Left ventricle myocardium superior (tissue), 1 donor: ENCODE measurements at regions of chr12 and their contacts with region 1.

Region 1: GRCh38 chr12:44338736-44339135 is 502.9 kb downstream of the TMEM117 start:
- DNase-seq: no peak
- ATAC-seq: no peak

Region 2: DNA sequence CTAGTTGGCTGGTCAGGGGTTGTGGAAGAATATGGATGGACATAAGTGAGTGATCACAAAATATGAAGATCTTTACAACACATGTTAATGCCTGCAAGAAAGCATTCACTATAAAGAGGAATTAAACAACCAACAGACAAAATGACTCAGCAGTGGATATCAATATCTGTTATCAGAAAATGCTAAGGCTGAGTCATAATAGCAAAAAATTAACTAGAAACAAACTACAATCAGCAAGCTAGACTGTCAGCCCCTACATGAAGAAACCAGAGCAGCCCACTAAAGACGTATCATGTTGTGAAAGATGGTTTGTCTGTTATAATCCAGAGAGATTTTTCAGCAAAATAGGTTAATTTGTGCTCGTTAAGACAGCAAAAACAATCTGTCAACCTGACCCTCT is 64.4 kb after region 1 on chr12:
- intact Hi-C with region 1: loop called (anchors 2 kb)
- DNase-seq: no peak
- ATAC-seq: no peak

Region 3: GRCh38 chr12:44728566-44728965 is 389.8 kb after region 1 on chr12:
- intact Hi-C with region 1: no loop called
- DNase-seq: no peak
- ATAC-seq: no peak